Colonic mucosa (tissue), 4 donors: ENCODE measurements at regions of chr11 and their contacts with region 1.

Region 1: GRCh38 chr11:93234602-93235207 is 36.9 kb upstream of the SLC36A4 start:
- DNase-seq: peak; percentile 82
- H3K4me3 ChIP-seq: no peak overlapping the region
- H3K27ac ChIP-seq: no peak overlapping the region
- H3K4me1 ChIP-seq: no peaks in the 10 kb centered on the region
- H3K27me3 ChIP-seq: no peaks in the 10 kb centered on the region
- CTCF ChIP-seq: peak; percentile 82

Region 2: GRCh38 chr11:93652161-93652597 is 417.5 kb after region 1 on chr11:
- intact Hi-C with region 1: loop called (anchors 1 kb)
- DNase-seq: peak; percentile 51
- H3K4me3 ChIP-seq: no peak overlapping the region
- H3K27ac ChIP-seq: no peak overlapping the region
- H3K4me1 ChIP-seq: no peaks in the 10 kb centered on the region
- H3K27me3 ChIP-seq: no peaks in the 10 kb centered on the region
- CTCF ChIP-seq: peak; percentile 69